ENCODE measurements at regions of chr20 and their contacts with region 1.

Region 1: GRCh38 chr20:47334022-47334551 is 22.4 kb downstream of the ZMYND8 start:
- DNase-seq: peak; percentile 71

Region 2: GRCh38 chr20:47086316-47086715 is 247.8 kb before region 1 on chr20:
- in situ Hi-C with region 1: no loop called
- DNase-seq: no peak

Region 3: DNA sequence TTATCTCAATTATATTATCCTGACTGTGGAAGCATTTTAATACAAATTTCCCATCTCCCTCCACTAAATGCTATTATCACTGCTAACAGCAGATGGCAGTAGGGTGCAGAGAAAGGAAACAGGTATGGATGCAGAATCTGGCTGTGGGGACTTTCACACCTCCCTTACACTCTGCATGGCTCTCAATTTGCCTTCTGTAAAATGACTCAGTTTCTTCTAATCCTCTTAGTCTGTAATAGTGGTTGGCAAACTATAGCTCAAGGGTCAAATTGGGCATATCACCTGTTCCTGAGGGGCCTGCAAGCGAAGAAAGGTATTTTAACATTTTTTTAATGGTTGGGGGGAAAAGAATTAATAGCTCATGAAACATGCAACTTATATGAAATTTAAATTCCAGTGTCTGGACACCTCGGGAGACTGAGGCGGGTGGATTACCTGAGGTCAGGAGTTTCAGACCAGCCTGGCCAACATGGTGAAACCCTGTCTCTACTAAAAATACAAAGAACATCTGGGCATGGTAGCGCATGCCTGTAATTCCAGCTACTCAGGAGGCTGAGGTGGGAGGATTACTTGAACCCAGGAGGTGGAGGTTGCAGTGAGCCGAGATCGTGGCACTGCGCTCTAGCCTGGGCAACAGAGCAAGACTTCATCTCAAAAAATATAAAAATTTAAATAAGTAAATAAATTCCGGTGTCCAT is 61.0 kb before region 1 on chr20:
- in situ Hi-C with region 1: loop called (anchors 10 kb)
- DNase-seq: peak; percentile 67

Region 4: GRCh38 chr20:47676219-47676721 is 342.2 kb after region 1 on chr20:
- in situ Hi-C with region 1: no loop called
- DNase-seq: no peak